ENCODE measurements at regions of chr10 and their contacts with region 1.

Region 1: GRCh38 chr10:84613336-84614021 is 285.1 kb downstream of the CCSER2 start:
- H3K4me3 ChIP-seq: no peak overlapping the region
- H3K27ac ChIP-seq: no peak overlapping the region
- H3K4me1 ChIP-seq: no peaks in the 10 kb centered on the region
- CTCF ChIP-seq: peak; percentile 89

Region 2: DNA sequence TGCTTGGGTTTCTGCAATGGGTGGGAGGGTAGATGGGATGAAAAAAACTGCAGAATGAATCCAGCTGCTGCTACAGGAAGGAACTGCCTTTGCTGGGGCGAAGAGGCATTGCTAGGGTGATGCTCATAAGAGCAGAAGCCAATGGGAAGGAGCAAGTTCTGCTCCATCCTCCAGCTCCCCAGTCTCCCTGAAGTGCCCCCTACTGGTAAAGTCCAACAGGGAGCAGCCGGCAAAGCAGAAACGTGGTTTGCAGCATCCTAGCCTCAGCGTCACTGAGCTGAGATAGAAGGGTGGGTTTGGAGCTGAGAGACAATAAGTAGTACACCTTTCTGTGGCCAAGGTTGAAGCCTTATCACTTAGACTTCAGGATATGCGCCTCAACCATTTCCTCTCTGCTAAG is 64.6 kb before region 1 on chr10:
- CTCF ChIA-PET with region 1: interaction called, 10 read pairs
- POLR2A ChIA-PET with region 1: no interaction called
- H3K4me3 ChIP-seq: no peak overlapping the region
- H3K27ac ChIP-seq: no peak overlapping the region
- H3K4me1 ChIP-seq: no peaks in the 10 kb centered on the region
- CTCF ChIP-seq: no peak

Region 3: DNA sequence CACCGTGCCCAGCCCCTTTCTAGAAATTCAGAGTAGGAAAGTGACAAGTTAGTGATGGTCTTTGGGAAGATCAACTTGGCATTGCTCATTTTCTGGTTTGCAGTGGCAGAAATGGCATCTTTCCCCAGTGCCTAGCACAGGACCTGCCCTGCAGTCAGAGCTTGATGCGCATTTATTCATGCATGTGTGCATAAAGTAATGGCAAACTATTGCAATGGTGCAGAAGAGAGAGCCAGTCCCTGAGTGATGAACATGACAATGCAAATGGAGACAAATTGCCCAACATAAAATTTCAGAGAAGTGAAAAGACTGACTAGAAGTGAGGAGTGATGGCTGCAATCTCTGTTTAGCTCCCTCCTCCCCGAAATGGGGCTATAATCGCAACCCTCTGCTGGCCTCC is 16.9 kb before region 1 on chr10:
- CTCF ChIA-PET with region 1: interaction called, 11 read pairs
- POLR2A ChIA-PET with region 1: no interaction called
- H3K4me3 ChIP-seq: no peak overlapping the region
- H3K27ac ChIP-seq: no peak overlapping the region
- H3K4me1 ChIP-seq: no peaks in the 10 kb centered on the region
- CTCF ChIP-seq: no peak

Region 4: DNA sequence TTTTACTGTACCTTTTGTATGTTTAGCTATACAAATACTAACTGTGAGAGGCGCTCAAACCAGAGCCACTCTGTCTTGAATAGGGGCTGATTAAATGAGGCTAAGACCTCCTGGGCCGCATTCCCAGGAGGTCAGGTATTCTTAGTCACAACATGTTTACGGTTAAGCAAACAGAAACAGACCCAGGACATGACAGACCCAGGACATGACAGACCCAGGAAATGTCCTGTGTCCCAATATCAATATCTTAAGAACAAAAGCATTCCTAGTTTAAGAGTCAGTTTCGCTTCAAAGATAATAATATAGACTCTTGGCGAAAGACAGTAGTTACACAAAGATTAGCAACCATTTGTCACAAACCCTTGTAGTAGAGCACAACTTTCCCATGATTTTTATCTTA is 19.4 kb after region 1 on chr10:
- CTCF ChIA-PET with region 1: interaction called, 12 read pairs
- POLR2A ChIA-PET with region 1: no interaction called
- H3K4me3 ChIP-seq: no peak overlapping the region
- H3K27ac ChIP-seq: no peak overlapping the region
- H3K4me1 ChIP-seq: no peaks in the 10 kb centered on the region
- CTCF ChIP-seq: no peak

Region 5: GRCh38 chr10:84715911-84716310 is 102.4 kb after region 1 on chr10:
- CTCF ChIA-PET with region 1: interaction called, 17 read pairs
- POLR2A ChIA-PET with region 1: no interaction called
- H3K4me3 ChIP-seq: no peak overlapping the region
- H3K27ac ChIP-seq: no peak overlapping the region
- H3K4me1 ChIP-seq: no peaks in the 10 kb centered on the region
- CTCF ChIP-seq: peak; percentile 34; the same call in 1 of the 2 replicates